Breast epithelium (tissue), 4 donors: ENCODE measurements at regions of chr6 and their contacts with region 1.

Region 1: DNA sequence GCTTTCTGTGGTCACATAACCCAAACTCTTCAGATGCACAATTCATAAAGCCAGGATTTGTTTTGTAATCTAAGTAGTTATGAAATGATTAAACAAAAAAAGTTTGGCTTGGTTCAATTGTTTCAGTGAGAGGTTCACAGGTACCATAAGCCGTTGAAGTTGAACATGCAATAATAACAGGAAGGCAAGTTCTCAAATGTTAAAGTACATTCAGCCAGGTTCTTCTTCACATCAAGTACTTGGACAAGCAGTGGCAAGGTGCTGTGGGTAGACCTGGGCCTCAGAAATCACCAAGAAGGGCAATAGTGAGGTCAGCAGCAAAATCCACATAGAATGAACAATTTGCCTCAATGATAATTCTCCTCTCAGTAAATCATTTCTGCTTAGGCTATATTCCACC is 175.5 kb downstream of the EPM2A start:
- DNase-seq: no peak
- H3K4me3 ChIP-seq: no peak overlapping the region
- H3K27ac ChIP-seq: no peak overlapping the region
- H3K4me1 ChIP-seq: no peaks in the 10 kb centered on the region
- H3K27me3 ChIP-seq: no peaks in the 10 kb centered on the region
- CTCF ChIP-seq: no peak
- POLR2A ChIP-seq: no peak

Region 2: GRCh38 chr6:145075425-145075824 is 484.4 kb before region 1 on chr6:
- intact Hi-C with region 1: loop called (anchors 5 kb)
- DNase-seq: no peak
- H3K4me3 ChIP-seq: no peak overlapping the region
- H3K27ac ChIP-seq: no peak overlapping the region
- H3K4me1 ChIP-seq: no peaks in the 10 kb centered on the region
- H3K27me3 ChIP-seq: no peaks in the 10 kb centered on the region
- CTCF ChIP-seq: no peak
- POLR2A ChIP-seq: no peak

Region 3: DNA sequence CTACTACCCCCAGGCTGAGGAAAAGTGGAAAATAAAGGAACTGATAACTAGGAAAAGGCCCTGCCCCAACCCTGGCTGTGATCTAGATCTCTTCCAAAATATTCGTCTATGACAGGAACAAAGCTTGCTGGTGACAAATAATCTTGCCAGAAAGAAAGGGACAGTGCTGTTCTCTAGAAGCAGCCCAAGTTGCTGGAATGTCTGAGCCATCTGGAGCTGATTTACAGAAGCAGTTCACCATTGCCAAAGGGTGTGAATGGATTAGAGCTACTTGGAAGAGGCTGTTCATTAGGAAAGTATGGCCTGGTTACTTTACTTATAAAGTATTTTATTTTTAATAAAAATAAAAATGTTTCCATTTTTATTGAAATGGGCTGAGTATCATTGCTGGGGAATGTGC is 29.1 kb after region 1 on chr6:
- intact Hi-C with region 1: no loop called
- DNase-seq: no peak
- H3K4me3 ChIP-seq: no peak overlapping the region
- H3K27ac ChIP-seq: no peak overlapping the region
- H3K4me1 ChIP-seq: no peaks in the 10 kb centered on the region
- H3K27me3 ChIP-seq: no peaks in the 10 kb centered on the region
- CTCF ChIP-seq: no peak
- POLR2A ChIP-seq: no peak